AG04450 (cell line): ENCODE measurements at regions of chr3 and their contacts with region 1.

Region 1: GRCh38 chr3:157201648-157202278 is 41.8 kb upstream of the CCNL1 start:
- DNase-seq: no peak
- H3K4me3 ChIP-seq: no peak overlapping the region
- H3K27ac ChIP-seq: no peak overlapping the region
- H3K27me3 ChIP-seq: no peaks in the 10 kb centered on the region
- CTCF ChIP-seq: peak; percentile 50

Region 2: GRCh38 chr3:157232146-157232545 is 30.4 kb after region 1 on chr3:
- CTCF ChIA-PET with region 1: interaction called, 11 read pairs
- POLR2A ChIA-PET with region 1: no interaction called
- DNase-seq: no peak
- H3K4me3 ChIP-seq: no peak overlapping the region
- H3K27ac ChIP-seq: no peak overlapping the region
- H3K27me3 ChIP-seq: no peaks in the 10 kb centered on the region
- CTCF ChIP-seq: no peak

Region 3: DNA sequence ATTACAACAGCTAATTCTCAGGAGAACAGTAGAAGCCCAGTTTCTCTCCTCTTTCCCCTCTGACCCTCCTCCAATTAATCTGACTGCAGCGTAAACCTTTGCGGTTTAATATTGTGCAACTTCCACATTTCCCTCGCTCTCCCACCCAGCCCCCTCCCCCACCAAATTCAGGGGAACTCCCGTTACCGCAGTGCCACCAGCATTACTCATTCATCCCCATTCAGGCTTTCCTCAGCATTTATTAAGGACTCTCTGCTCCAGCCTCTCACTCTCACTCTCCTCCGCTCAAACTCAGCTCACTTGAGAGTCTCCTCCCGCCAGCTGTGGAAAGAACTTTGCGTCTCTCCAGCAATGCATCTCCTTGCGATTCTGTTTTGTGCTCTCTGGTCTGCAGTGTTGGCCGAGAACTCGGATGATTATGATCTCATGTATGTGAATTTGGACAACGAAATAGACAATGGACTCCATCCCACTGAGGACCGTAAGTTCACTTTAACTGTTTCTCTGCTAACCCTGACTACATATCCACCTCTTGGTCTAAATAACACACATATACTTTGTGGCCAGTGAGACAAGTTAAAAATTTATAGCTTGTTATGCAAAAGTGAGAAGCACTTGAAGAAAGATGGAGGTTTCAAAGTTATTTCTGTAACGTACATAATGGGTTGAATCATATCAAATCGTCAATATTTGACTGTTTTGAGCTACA is 235.0 kb after region 1 on chr3 and contains the start of gene PTX3:
- CTCF ChIA-PET with region 1: interaction called, 14 read pairs
- POLR2A ChIA-PET with region 1: no interaction called
- DNase-seq: peak; percentile 81
- H3K4me3 ChIP-seq: peak within 1 kb of the TSS; percentile 75
- H3K27ac ChIP-seq: peak within 1 kb of the TSS; percentile 47
- H3K27me3 ChIP-seq: no peaks in the 10 kb centered on the region
- CTCF ChIP-seq: no peak
- polyA plus RNA-seq, gene PTX3: 210 and 235 TPM in 2 replicates

Region 4: GRCh38 chr3:157447026-157447694 is 245.4 kb after region 1 on chr3:
- CTCF ChIA-PET with region 1: interaction called, 16 read pairs
- POLR2A ChIA-PET with region 1: no interaction called
- DNase-seq: no peak
- H3K4me3 ChIP-seq: no peak overlapping the region
- H3K27ac ChIP-seq: no peak overlapping the region
- H3K27me3 ChIP-seq: no peaks in the 10 kb centered on the region
- CTCF ChIP-seq: peak; percentile 83

Region 5: GRCh38 chr3:157493627-157494550 is 292.1 kb after region 1 on chr3:
- CTCF ChIA-PET with region 1: interaction called, 79 read pairs
- POLR2A ChIA-PET with region 1: no interaction called
- DNase-seq: no peak
- H3K4me3 ChIP-seq: no peak overlapping the region
- H3K27ac ChIP-seq: no peak overlapping the region
- H3K27me3 ChIP-seq: no peaks in the 10 kb centered on the region
- CTCF ChIP-seq: peak; percentile 74

Region 6: GRCh38 chr3:157499342-157499963 is 297.7 kb after region 1 on chr3:
- CTCF ChIA-PET with region 1: interaction called, 79 read pairs
- POLR2A ChIA-PET with region 1: no interaction called
- DNase-seq: no peak
- H3K4me3 ChIP-seq: peak overlapping the region; percentile 52
- H3K27ac ChIP-seq: no peak overlapping the region
- H3K27me3 ChIP-seq: no peaks in the 10 kb centered on the region
- CTCF ChIP-seq: 0 out of 2 replicates have a peak, but pooled peaks have one; percentile 11

Region 7: DNA sequence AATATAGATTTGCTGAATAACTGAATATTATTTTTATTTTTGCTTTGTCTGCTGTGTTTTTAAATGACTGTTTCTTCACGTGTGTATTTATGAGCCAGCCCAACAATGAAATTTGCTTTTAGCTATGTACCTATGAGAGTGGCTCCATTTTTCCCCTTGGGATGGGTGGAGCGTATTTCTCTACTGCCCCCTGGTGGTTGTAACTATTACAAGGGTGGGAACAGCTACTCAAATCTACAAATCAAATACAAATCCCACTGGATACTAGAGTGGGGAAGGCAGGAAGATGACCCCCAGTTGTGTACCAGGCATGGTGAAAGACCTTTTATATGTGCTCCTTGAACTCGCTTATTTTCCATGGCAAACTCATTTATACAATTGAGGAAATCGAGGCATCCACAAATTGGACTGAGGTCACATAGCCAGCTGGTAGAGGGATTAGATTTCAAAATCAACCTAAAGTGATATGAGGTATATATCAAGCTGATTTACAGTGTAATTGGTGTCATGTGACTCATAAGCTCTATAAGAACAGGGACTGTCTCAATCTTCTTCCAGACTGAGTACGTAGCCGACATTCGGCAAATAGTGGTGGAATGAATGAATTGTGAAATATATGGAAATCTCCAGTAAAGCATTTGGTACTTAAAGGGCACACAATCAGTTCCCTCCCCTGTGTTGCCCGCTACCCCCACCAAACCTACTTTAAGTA is 371.0 kb after region 1 on chr3:
- CTCF ChIA-PET with region 1: interaction called, 13 read pairs
- POLR2A ChIA-PET with region 1: no interaction called
- DNase-seq: no peak
- H3K4me3 ChIP-seq: no peak overlapping the region
- H3K27ac ChIP-seq: no peak overlapping the region
- H3K27me3 ChIP-seq: no peaks in the 10 kb centered on the region
- CTCF ChIP-seq: peak; percentile 82